ENCODE measurements at regions of chr12 and their contacts with region 1.

Region 1: DNA sequence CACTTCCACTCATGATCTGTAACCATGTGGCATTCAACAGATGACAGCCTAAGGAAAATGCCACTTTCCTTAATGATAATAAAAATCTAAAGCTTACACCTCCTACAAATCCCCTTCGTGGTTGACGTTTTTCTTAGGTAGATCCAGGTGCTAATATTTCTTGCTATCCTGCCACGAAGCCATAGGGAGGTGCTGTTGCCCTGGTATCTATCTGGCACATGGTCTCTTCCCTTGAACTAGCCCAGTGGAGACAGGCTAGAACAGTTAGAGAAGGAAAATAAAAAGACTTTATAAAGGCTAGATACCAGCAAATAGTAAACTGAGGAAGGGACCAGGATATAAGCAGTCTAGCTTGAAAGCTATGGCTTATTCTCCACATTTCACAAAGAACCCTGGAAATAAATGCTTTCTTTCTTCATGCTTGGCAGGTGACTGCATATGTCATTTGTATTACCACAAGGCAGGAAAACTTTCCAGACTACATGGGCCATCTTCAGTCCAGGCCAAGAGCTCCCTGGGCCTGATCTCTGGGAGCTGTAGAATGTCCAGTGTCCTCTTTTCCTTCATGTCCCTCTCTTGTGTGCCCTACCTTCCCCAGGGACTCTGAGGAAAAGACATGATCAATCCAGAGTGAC is 15.3 kb downstream of the SPIC start:
- DNase-seq: no peak
- H3K4me3 ChIP-seq: no peak overlapping the region
- H3K27ac ChIP-seq: no peak overlapping the region
- H3K4me1 ChIP-seq: no peaks in the 10 kb centered on the region
- H3K27me3 ChIP-seq: no peaks in the 10 kb centered on the region
- CTCF ChIP-seq: peak in 1 of 3 experiments; percentile 20
- POLR2A ChIP-seq: no peak

Region 2: GRCh38 chr12:101361455-101361854 is 128.9 kb before region 1 on chr12:
- intact Hi-C with region 1: no loop called
- DNase-seq: no peak
- H3K4me3 ChIP-seq: no peak overlapping the region
- H3K27ac ChIP-seq: no peak overlapping the region
- H3K4me1 ChIP-seq: no peaks in the 10 kb centered on the region
- H3K27me3 ChIP-seq: no peaks in the 10 kb centered on the region
- CTCF ChIP-seq: no peak
- POLR2A ChIP-seq: no peak

Region 3: GRCh38 chr12:101925361-101925760 is 435.0 kb after region 1 on chr12:
- intact Hi-C with region 1: loop called (anchors 5 kb)
- DNase-seq: peak in 1 of 2 donors; percentile 94
- H3K4me3 ChIP-seq: no peak overlapping the region
- H3K27ac ChIP-seq: peak overlapping the region; percentile 75
- H3K4me1 ChIP-seq: no peaks in the 10 kb centered on the region
- H3K27me3 ChIP-seq: no peaks in the 10 kb centered on the region
- CTCF ChIP-seq: no peak
- POLR2A ChIP-seq: no peak